Mammary epithelial cell (primary cell): ENCODE measurements at regions of chr12 and their contacts with region 1.

Region 1: DNA sequence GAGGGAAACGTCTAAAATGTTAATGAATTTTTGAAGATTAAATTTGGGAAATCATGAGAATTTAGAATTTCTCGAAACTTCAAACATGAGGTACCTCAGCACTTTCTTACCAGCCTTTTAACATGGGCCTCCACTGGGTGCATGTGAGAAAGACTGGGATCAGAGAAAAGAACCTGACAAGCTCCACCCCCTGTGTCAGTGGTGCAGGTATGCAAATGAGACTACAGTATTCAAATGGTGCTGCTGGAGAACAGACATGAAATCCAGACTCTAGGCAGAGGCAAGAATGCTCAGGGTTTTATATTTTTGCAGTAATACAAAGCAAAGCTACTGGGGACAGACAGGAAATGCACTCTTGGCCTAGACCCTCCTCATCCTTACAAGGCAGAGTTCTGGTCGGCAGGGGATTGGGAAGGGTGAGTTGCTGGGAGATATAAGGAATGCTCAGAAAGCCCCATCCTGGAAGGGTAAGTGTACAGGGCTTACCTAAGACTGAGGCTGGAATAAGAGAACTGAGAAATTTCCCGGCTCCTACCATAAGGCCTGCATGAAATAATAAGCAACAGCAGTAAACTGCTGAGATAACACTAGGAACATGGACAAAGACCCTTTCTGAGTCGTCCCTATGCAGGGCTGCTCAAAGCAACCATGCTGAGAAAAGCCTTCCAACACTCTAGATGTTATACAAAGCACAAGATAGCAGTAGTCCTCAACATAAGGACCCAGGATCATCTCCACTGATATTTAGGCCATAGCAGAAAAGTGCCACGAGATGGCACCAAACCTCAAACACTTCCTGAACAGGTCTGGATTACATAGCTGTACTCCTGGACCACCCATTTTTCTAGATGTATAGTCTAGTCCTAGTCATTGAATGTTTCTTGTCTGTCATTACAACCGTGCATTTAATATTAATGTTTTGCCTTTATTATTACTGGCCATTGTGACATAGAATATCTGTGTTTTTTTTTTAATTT is 260.8 kb downstream of the RASSF9 start:
- DNase-seq: peak; percentile 47
- H3K4me3 ChIP-seq: no peak overlapping the region
- H3K27ac ChIP-seq: no peak overlapping the region
- H3K4me1 ChIP-seq: no peaks in the 10 kb centered on the region
- H3K27me3 ChIP-seq: no peaks in the 10 kb centered on the region
- CTCF ChIP-seq: peak; percentile 81 to 86

Region 2: GRCh38 chr12:85468356-85469157 is 106.9 kb before region 1 on chr12:
- CTCF ChIA-PET with region 1: no interaction called
- dilution Hi-C with region 1: no loop called
- in situ Hi-C with region 1: no loop called
- intact Hi-C with region 1: loop called (anchors 5 kb)
- DNase-seq: peak; percentile 70
- H3K4me3 ChIP-seq: peak overlapping the region in 2 of 3 experiments; percentile 15 to 16
- H3K27ac ChIP-seq: peak overlapping the region; percentile 31
- H3K4me1 ChIP-seq: peaks cover 43% of the 10 kb centered on the region
- H3K27me3 ChIP-seq: no peaks in the 10 kb centered on the region
- CTCF ChIP-seq: peak; percentile 81 to 84

Region 3: GRCh38 chr12:85610194-85610593 is 34.8 kb after region 1 on chr12:
- CTCF ChIA-PET with region 1: no interaction called
- dilution Hi-C with region 1: no loop called
- in situ Hi-C with region 1: no loop called
- intact Hi-C with region 1: no loop called
- DNase-seq: no peak
- H3K4me3 ChIP-seq: no peak overlapping the region
- H3K27ac ChIP-seq: no peak overlapping the region
- H3K4me1 ChIP-seq: no peaks in the 10 kb centered on the region
- H3K27me3 ChIP-seq: no peaks in the 10 kb centered on the region
- CTCF ChIP-seq: no peak

Region 4: DNA sequence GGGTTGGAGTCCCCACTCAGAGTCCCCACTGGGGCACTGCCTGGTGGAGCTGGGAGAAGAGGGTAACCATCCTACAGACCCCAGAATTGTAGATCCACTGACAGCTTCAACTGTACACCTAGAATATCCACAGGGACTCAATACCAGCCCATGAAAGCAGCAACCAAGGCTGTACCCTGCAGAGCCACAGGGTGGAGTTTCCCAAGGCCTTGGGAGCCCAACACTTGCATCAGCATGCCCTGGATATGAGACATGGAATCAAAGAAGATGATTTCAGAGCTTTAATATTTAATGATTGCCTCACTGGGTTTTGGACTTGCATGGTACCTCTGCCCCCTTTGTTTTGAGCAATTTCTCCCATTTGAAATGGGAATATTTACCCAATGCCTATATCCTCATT is 180.4 kb after region 1 on chr12:
- CTCF ChIA-PET with region 1: no interaction called
- dilution Hi-C with region 1: no loop called
- in situ Hi-C with region 1: no loop called
- intact Hi-C with region 1: loop called (anchors 2 kb)
- DNase-seq: peak; percentile 74
- H3K4me3 ChIP-seq: no peak overlapping the region
- H3K27ac ChIP-seq: peak overlapping the region; percentile 48
- H3K4me1 ChIP-seq: peaks cover 11% of the 10 kb centered on the region
- H3K27me3 ChIP-seq: no peaks in the 10 kb centered on the region
- CTCF ChIP-seq: peak; percentile 40 to 72

Region 5: GRCh38 chr12:85784096-85784720 is 208.8 kb after region 1 on chr12:
- CTCF ChIA-PET with region 1: no interaction called
- dilution Hi-C with region 1: no loop called
- in situ Hi-C with region 1: no loop called
- intact Hi-C with region 1: loop called (anchors 1 kb)
- DNase-seq: peak; percentile 68
- H3K4me3 ChIP-seq: no peak overlapping the region
- H3K27ac ChIP-seq: peak overlapping the region; percentile 25
- H3K4me1 ChIP-seq: no peaks in the 10 kb centered on the region
- H3K27me3 ChIP-seq: no peaks in the 10 kb centered on the region
- CTCF ChIP-seq: no peak

Region 6: GRCh38 chr12:85872497-85873091 is 297.2 kb after region 1 on chr12:
- CTCF ChIA-PET with region 1: interaction called, 9 read pairs
- dilution Hi-C with region 1: no loop called
- in situ Hi-C with region 1: loop called (anchors 5 to 10 kb)
- intact Hi-C with region 1: loop called (anchors 1 kb)
- DNase-seq: peak; percentile 45
- H3K4me3 ChIP-seq: no peak overlapping the region
- H3K27ac ChIP-seq: no peak overlapping the region
- H3K4me1 ChIP-seq: no peaks in the 10 kb centered on the region
- H3K27me3 ChIP-seq: no peaks in the 10 kb centered on the region
- CTCF ChIP-seq: peak; percentile 69 to 74